Left cardiac atrium (tissue), 4 donors: ENCODE measurements at regions of chr4 and their contacts with region 1.

Region 1: GRCh38 chr4:26719954-26720552 is 136.2 kb downstream of the TBC1D19 start:
- DNase-seq: no peak
- ATAC-seq: no peak

Region 2: DNA sequence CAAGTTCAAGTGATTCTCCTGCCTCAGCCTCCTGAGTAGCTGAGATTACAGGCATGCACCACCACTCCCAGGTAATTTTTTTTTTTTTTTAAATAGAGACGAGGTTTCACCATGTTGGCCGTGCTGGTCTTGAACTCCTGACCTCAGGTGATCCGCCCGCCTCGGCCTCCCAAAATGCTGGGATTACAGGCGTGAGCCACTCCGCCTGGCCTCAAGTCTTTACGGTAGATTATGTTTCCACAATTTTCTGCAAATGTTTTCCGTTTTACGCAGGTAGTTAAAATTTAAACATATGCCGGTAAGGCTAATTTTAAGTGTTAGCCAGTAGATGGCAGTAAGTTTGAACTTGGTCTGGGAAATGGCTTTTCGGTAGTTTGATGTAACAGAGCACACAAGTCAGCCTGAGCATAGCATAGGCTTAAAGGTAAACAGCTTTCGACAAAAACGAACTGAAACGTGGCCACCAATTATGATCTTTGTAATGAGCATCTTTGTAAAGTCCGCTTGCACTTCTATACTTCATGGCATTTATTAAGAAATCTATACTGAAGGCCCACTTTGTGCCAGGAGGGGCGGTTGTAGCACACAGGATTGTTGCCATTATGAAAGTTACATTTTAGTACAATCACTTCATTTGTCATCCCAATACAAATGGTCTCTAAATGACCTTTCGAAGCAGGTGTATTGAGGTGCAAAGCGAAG is 260.8 kb before region 1 on chr4:
- intact Hi-C with region 1: loop called (anchors 5 to 10 kb)
- DNase-seq: no peak
- ATAC-seq: peak; percentile 53 to 59